Endothelial cell of umbilical vein (primary cell): ENCODE measurements at regions of chr4 and their contacts with region 1.

Region 1: DNA sequence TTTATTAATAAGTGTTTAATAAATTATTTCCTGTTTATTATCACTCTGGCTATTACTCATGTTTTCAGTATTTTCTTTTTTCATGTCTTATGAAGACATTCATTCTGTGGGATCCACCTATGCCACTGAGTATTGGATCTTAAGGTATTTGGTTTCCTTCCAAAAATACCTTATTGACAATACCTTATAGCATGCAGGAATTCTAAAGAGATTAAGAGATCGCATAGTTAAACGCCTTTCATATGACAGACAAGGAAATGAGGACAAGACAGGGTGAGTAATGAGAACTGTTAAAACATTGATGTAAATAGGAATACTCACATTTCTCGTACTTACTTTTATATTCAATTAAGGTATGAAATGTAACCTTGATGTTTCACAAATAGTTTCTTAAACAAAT is 38.2 kb upstream of the TMPRSS11B start:
- DNase-seq: no peak
- H3K4me3 ChIP-seq: no peak overlapping the region
- H3K27ac ChIP-seq: no peak overlapping the region
- H3K4me1 ChIP-seq: no peaks in the 10 kb centered on the region
- H3K27me3 ChIP-seq: peaks cover 0 to 10% of the 10 kb centered on the region in 2 experiments
- CTCF ChIP-seq: no peak
- POLR2A ChIP-seq: no peak

Region 2: GRCh38 chr4:68271851-68272756 is 11.6 kb before region 1 on chr4:
- CTCF ChIA-PET with region 1: interaction called, 11 read pairs
- POLR2A ChIA-PET with region 1: no interaction called
- dilution Hi-C with region 1: no loop called
- intact Hi-C with region 1: no loop called
- DNase-seq: peak; percentile 73
- H3K4me3 ChIP-seq: no peak overlapping the region
- H3K27ac ChIP-seq: no peak overlapping the region
- H3K4me1 ChIP-seq: no peaks in the 10 kb centered on the region
- H3K27me3 ChIP-seq: peaks cover 10 to 15% of the 10 kb centered on the region in 2 experiments
- CTCF ChIP-seq: peak; percentile 37 to 42
- POLR2A ChIP-seq: no peak

Region 3: GRCh38 chr4:68324519-68325262 is 41.0 kb after region 1 on chr4:
- CTCF ChIA-PET with region 1: no interaction called
- POLR2A ChIA-PET with region 1: no interaction called
- dilution Hi-C with region 1: no loop called
- intact Hi-C with region 1: no loop called
- DNase-seq: peak; percentile 30
- H3K4me3 ChIP-seq: no peak overlapping the region
- H3K27ac ChIP-seq: no peak overlapping the region
- H3K4me1 ChIP-seq: no peaks in the 10 kb centered on the region
- H3K27me3 ChIP-seq: no peaks in the 10 kb centered on the region
- CTCF ChIP-seq: no peak
- POLR2A ChIP-seq: no peak

Region 4: GRCh38 chr4:68765876-68766275 is 482.2 kb after region 1 on chr4:
- CTCF ChIA-PET with region 1: no interaction called
- POLR2A ChIA-PET with region 1: no interaction called
- dilution Hi-C with region 1: no loop called
- intact Hi-C with region 1: no loop called
- DNase-seq: no peak
- H3K4me3 ChIP-seq: no peak overlapping the region
- H3K27ac ChIP-seq: no peak overlapping the region
- H3K4me1 ChIP-seq: no peaks in the 10 kb centered on the region
- H3K27me3 ChIP-seq: no peaks in the 10 kb centered on the region
- CTCF ChIP-seq: no peak
- POLR2A ChIP-seq: no peak